Caki2 (cell line): ENCODE measurements at regions of chr12 and their contacts with region 1.

Region 1: DNA sequence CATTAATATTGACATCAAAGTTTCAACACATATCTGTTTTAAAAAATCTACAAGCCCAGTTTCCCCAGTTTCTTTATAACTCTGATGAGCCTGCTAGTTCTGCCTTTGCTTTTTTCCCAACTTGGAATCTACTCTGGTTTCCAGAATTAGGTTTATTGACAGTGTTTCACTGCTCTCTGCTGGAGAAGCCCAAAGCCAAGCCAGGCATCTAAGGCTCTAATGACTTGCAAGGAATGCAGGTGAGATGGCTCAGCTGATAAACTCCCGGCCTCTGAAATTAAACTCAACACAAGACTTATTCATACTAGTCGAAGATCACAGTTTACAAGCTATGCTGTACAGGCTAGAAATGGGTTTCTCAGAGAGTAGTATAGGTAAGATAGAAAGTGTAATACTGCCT is 54.3 kb downstream of the HMGA2 start:
- DNase-seq: peak; percentile 80

Region 2: GRCh38 chr12:65923228-65923627 is 44.7 kb after region 1 on chr12:
- in situ Hi-C with region 1: no loop called
- DNase-seq: no peak

Region 3: DNA sequence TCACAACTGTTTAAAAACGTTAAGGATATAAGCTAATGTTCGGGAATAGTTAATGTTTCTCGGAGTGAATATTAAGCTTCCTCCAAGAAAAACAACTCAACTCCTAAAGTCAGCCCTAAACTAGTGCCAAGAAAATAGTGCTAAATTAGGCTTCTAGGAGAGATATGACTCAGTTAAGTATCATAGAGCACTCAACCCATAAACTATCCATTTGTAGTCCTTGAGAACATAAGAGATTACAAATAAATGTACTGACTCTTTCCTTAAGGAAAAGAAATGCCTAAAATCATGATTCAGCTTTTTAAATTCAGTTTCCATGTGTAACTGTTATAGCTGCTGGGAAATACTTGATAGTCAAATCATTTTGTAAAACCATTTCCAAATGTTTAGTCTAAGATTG is 62.8 kb after region 1 on chr12:
- in situ Hi-C with region 1: loop called (anchors 5 kb)
- DNase-seq: peak; percentile 98